PC-3 (cell line): ENCODE measurements at regions of chr4 and their contacts with region 1.

Region 1: DNA sequence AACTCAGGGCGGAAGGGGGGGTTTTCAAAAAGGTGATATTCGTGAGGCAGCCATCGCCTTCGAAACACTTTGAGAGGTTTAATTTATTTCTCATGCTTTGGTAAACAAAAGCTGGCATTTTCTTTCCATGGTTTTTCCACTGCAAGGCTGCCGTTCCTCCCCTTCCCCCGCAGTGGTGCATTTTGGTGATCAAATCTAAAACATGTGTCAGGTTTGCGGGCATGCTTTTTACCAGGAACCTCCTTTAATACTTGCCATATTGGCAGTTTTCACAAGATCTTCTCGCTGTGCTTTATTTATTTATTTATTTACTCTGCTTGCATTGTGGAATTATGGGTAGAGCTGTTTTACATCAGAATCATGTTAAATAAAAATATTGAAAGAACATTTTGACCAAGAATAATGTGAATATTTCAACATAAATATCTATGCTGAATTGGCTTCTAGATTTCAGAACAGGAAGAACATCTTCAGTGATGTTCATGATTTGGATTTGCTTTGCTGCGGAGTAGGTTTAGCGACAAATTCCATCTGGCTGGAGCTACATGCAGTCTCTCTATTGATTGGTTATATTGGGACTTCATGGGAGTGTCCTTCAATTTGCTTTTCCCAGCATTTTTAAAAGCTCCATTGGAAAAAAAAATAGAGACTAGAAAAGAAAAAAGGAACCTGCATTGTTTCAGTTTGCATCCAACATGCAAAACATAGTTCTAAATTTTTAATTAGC is 54.4 kb downstream of the STOX2 start:
- DNase-seq: no peak
- ATAC-seq: no peak
- H3K4me3 ChIP-seq: no peak overlapping the region
- H3K27ac ChIP-seq: no peak overlapping the region
- H3K4me1 ChIP-seq: no peaks in the 10 kb centered on the region
- H3K27me3 ChIP-seq: peaks cover 32% of the 10 kb centered on the region; the same call in 1 of the 2 replicates
- CTCF ChIP-seq: no peak

Region 2: GRCh38 chr4:184074989-184075388 is 115.5 kb after region 1 on chr4:
- CTCF ChIA-PET with region 1: no interaction called
- POLR2A ChIA-PET with region 1: no interaction called
- intact Hi-C with region 1: loop called (anchors 10 kb)
- DNase-seq: no peak
- ATAC-seq: no peak
- H3K4me3 ChIP-seq: no peak overlapping the region
- H3K27ac ChIP-seq: no peak overlapping the region
- H3K4me1 ChIP-seq: no peaks in the 10 kb centered on the region
- H3K27me3 ChIP-seq: peaks cover 63% of the 10 kb centered on the region
- CTCF ChIP-seq: no peak